Endothelial cell of umbilical vein (primary cell): ENCODE measurements at regions of chr12 and their contacts with region 1.

Region 1: GRCh38 chr12:6039894-6040568 is 84.4 kb downstream of the VWF start:
- DNase-seq: peak; percentile 69
- H3K4me3 ChIP-seq: no peak overlapping the region
- H3K27ac ChIP-seq: peak overlapping the region; percentile 6
- H3K4me1 ChIP-seq: no peaks in the 10 kb centered on the region
- H3K27me3 ChIP-seq: no peaks in the 10 kb centered on the region
- CTCF ChIP-seq: peak; percentile 68
- POLR2A ChIP-seq: no peak

Region 2: DNA sequence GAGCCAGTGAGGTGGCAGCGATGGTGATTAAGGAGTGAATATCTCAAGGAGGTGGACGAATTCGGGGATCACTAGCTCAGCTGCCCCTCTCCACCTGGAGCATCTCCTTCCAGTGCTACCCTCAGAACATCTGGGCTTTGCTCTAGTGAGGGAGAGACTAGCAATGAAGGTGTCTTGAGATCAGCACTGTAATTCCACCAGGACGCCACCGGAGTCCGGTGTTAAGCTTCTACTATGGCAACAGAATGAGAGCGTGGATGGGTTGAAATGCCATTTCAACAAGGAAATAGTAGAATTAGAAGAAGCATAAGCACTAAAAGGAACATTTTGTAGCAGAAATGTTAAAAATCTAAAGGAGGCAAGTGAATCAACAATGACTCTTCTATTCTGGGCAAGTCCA is 547.0 kb before region 1 on chr12:
- CTCF ChIA-PET with region 1: no interaction called
- POLR2A ChIA-PET with region 1: no interaction called
- dilution Hi-C with region 1: no loop called
- intact Hi-C with region 1: no loop called
- DNase-seq: no peak
- H3K4me3 ChIP-seq: no peak overlapping the region
- H3K27ac ChIP-seq: no peak overlapping the region
- H3K4me1 ChIP-seq: no peaks in the 10 kb centered on the region
- H3K27me3 ChIP-seq: no peaks in the 10 kb centered on the region
- CTCF ChIP-seq: no peak
- POLR2A ChIP-seq: no peak

Region 3: GRCh38 chr12:5756338-5756842 is 283.6 kb before region 1 on chr12:
- CTCF ChIA-PET with region 1: no interaction called
- POLR2A ChIA-PET with region 1: no interaction called
- dilution Hi-C with region 1: no loop called
- intact Hi-C with region 1: no loop called
- DNase-seq: no peak
- H3K4me3 ChIP-seq: no peak overlapping the region
- H3K27ac ChIP-seq: no peak overlapping the region
- H3K4me1 ChIP-seq: no peaks in the 10 kb centered on the region
- H3K27me3 ChIP-seq: no peaks in the 10 kb centered on the region
- CTCF ChIP-seq: no peak
- POLR2A ChIP-seq: no peak

Region 4: GRCh38 chr12:5988659-5989116 is 51.3 kb before region 1 on chr12:
- CTCF ChIA-PET with region 1: interaction called, 60 read pairs
- POLR2A ChIA-PET with region 1: no interaction called
- dilution Hi-C with region 1: no loop called
- intact Hi-C with region 1: loop called (anchors 1 kb)
- DNase-seq: peak; percentile 73
- H3K4me3 ChIP-seq: no peak overlapping the region
- H3K27ac ChIP-seq: no peak overlapping the region
- H3K4me1 ChIP-seq: no peaks in the 10 kb centered on the region
- H3K27me3 ChIP-seq: no peaks in the 10 kb centered on the region
- CTCF ChIP-seq: peak; percentile 91 to 93
- POLR2A ChIP-seq: no peak

Region 5: GRCh38 chr12:6026998-6027397 is 13.0 kb before region 1 on chr12:
- CTCF ChIA-PET with region 1: interaction called, 18 read pairs
- POLR2A ChIA-PET with region 1: no interaction called
- dilution Hi-C with region 1: no loop called
- intact Hi-C with region 1: no loop called
- DNase-seq: peak; percentile 76
- H3K4me3 ChIP-seq: no peak overlapping the region
- H3K27ac ChIP-seq: no peak overlapping the region
- H3K4me1 ChIP-seq: peaks cover 23% of the 10 kb centered on the region
- H3K27me3 ChIP-seq: no peaks in the 10 kb centered on the region
- CTCF ChIP-seq: no peak
- POLR2A ChIP-seq: no peak

Region 6: DNA sequence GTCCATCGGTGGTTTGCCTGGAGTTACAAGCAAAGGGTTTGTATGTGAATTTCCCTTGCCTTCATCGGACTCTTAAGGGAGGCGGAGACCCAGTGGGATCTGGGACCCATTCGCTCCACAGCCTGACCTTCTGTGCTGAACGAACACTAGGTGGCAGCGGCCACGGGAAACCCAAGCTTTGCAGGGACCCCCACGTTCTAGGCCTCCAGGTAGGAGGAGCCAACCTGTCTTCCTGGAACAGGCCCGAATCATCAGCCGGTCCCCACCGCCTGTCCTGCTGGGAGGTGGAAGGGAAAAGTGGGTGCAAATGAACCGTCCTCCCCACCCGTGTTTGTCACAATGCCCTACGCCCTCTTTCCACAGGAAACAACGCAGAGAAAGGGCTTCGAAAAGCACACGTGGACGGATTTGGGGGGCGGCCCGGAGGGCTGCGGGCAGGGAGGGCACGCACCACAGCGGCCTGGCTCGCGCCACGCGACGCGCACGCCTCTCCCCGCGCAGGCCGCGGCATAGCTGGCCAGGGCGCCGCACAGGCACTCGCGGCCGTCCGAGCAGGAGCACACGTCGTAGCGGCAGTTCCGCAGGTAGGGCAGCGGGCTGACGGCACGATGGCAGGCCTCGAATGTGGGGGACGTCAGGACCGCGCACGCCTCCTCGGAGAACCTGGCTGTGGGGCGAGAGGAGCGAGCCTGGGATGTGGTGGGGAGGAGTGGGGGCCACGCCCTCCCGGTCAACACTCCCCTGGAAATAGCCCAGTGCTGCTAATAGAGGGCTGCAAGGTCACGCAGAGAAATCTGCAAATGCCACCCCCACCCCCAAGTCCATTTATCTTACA is 16.6 kb after region 1 on chr12:
- CTCF ChIA-PET with region 1: interaction called, 11 read pairs
- POLR2A ChIA-PET with region 1: no interaction called
- dilution Hi-C with region 1: no loop called
- intact Hi-C with region 1: no loop called
- DNase-seq: no peak
- H3K4me3 ChIP-seq: no peak overlapping the region
- H3K27ac ChIP-seq: no peak overlapping the region
- H3K4me1 ChIP-seq: peaks cover 38% of the 10 kb centered on the region
- H3K27me3 ChIP-seq: no peaks in the 10 kb centered on the region
- CTCF ChIP-seq: peak; percentile 25 to 52
- POLR2A ChIP-seq: no peak